ENCODE measurements at regions of chr5 and their contacts with region 1.

Region 1: GRCh38 chr5:153964880-153965645 is 73.6 kb downstream of the FAM114A2 start:
- DNase-seq: peak in 5 of 9 experiments; percentile 11 to 65 (median 53)
- ATAC-seq: no peak
- H3K4me3 ChIP-seq: no peak overlapping the region
- H3K4me3 Mint-ChIP-seq: no peak overlapping the region
- H3K27ac ChIP-seq: no peak overlapping the region
- H3K27ac Mint-ChIP-seq: no peak overlapping the region
- H3K4me1 ChIP-seq: peaks cover 4% of the 10 kb centered on the region
- H3K4me1 Mint-ChIP-seq: peaks cover 12% of the 10 kb centered on the region
- H3K27me3 ChIP-seq: peaks cover 0 to 4% of the 10 kb centered on the region in 2 experiments
- H3K27me3 Mint-ChIP-seq: peaks cover 5% of the 10 kb centered on the region
- CTCF ChIP-seq: peak; percentile 45

Region 2: GRCh38 chr5:152532714-152533113 is 1432.3 kb before region 1 on chr5:
- CTCF ChIA-PET with region 1: interaction called, 6 read pairs
- POLR2A ChIA-PET with region 1: no interaction called
- intact Hi-C with region 1: loop called in 1 of 2 experiments (anchors 2 kb)
- DNase-seq: peak in 2 of 9 experiments; percentile 42 to 50
- ATAC-seq: no peak
- H3K4me3 ChIP-seq: no peak overlapping the region
- H3K4me3 Mint-ChIP-seq: no peak overlapping the region
- H3K27ac ChIP-seq: no peak overlapping the region
- H3K27ac Mint-ChIP-seq: no peak overlapping the region
- H3K4me1 ChIP-seq: peaks cover 4% of the 10 kb centered on the region
- H3K4me1 Mint-ChIP-seq: peaks cover 4% of the 10 kb centered on the region
- H3K27me3 ChIP-seq: no peaks in the 10 kb centered on the region
- H3K27me3 Mint-ChIP-seq: no peaks in the 10 kb centered on the region
- CTCF ChIP-seq: no peak

Region 3: DNA sequence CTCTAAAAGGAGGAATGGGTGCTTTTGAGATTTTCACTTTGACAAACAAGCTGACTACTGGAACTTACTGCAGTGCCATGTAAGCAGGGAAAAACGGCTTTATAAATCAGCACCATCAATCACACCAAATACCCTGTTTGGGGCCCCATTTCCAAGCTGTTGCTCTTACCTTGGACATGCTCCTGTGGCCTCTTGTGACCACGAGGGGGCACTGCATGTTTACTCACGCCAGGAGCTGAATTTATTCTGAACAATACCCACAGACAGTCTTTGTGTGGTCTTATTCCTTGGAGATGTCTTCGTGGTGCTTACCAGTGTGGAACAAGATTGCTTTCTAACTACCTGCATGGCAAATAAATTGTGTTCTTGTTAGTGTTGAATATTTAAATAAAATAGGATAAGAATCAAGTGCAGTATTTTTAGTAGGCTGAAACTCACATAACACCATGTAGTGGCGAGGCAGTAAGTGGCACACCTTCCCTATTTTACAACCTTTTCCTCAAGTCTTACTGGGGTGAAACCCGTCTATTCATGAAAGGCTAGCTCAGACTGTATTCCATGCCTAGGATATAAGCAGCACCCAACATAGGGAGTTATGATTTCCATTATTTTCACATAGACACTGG is 1404.4 kb before region 1 on chr5:
- CTCF ChIA-PET with region 1: interaction called, 3 read pairs
- POLR2A ChIA-PET with region 1: no interaction called
- intact Hi-C with region 1: loop called in 1 of 2 experiments (anchors 10 kb)
- DNase-seq: peak in 4 of 9 experiments; percentile 6 to 43 (median 28)
- ATAC-seq: no peak
- H3K4me3 ChIP-seq: no peak overlapping the region
- H3K4me3 Mint-ChIP-seq: no peak overlapping the region
- H3K27ac ChIP-seq: no peak overlapping the region
- H3K27ac Mint-ChIP-seq: no peak overlapping the region
- H3K4me1 ChIP-seq: no peaks in the 10 kb centered on the region
- H3K4me1 Mint-ChIP-seq: no peaks in the 10 kb centered on the region
- H3K27me3 ChIP-seq: no peaks in the 10 kb centered on the region
- H3K27me3 Mint-ChIP-seq: no peaks in the 10 kb centered on the region
- CTCF ChIP-seq: no peak

Region 4: GRCh38 chr5:154583545-154584496 is 618.8 kb after region 1 on chr5:
- CTCF ChIA-PET with region 1: no interaction called
- POLR2A ChIA-PET with region 1: no interaction called
- intact Hi-C with region 1: no loop called
- DNase-seq: no peak
- ATAC-seq: no peak
- H3K4me3 ChIP-seq: no peak overlapping the region
- H3K4me3 Mint-ChIP-seq: no peak overlapping the region
- H3K27ac ChIP-seq: no peak overlapping the region
- H3K27ac Mint-ChIP-seq: no peak overlapping the region
- H3K4me1 ChIP-seq: no peaks in the 10 kb centered on the region
- H3K4me1 Mint-ChIP-seq: no peaks in the 10 kb centered on the region
- H3K27me3 ChIP-seq: no peaks in the 10 kb centered on the region
- H3K27me3 Mint-ChIP-seq: peaks cover 23% of the 10 kb centered on the region
- CTCF ChIP-seq: no peak